ENCODE measurements at regions of chr2 and their contacts with region 1.

Region 1: DNA sequence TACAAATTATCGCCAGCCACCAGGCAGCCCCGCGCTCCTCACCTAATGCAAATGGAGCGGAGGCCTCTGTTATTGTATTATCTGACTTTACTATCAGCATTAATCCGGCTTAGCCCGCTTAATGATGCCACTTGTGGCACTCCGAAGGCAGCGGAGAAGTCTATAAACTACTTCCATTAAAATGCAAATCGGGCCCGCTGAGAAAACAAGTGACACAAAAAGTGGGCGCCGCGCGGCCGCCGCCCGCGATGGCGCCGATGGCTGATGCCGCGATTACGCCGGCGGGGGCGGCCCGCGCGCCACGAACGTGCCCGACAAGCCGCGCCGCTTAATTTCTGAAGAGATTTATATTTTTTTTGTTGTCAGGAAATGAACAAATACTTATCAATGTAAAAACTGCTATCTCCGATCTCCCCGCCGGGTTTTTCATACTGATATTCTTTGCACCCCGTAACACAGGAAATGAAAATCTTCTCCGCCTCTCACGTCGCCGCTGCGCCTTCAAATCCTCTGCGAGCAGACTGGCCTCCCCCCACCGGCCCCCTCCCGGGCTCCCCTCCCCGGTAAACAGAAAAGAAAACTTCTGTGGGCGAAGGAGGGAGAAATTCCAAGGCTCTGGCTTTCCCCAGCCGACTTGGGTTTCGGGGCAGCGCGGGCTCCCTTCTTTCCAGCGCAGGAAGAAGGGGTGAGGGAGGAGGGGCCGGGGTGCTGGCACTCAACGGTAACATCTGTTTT is 221.8 kb downstream of the INSIG2 start:
- DNase-seq: peak; percentile 83
- ATAC-seq: peak; percentile 86
- H3K4me3 Mint-ChIP-seq: peak overlapping the region; percentile 76
- H3K27ac Mint-ChIP-seq: peak overlapping the region; percentile 93
- H3K4me1 Mint-ChIP-seq: peaks cover 7% of the 10 kb centered on the region
- H3K27me3 Mint-ChIP-seq: no peaks in the 10 kb centered on the region

Region 2: GRCh38 chr2:118013724-118014491 is 296.2 kb before region 1 on chr2 and contains the start of gene CCDC93:
- CTCF ChIA-PET with region 1: no interaction called
- POLR2A ChIA-PET with region 1: no interaction called
- intact Hi-C with region 1: loop called in 1 of 2 experiments (anchors 1 kb)
- DNase-seq: peak; percentile 90
- ATAC-seq: peak; percentile 89
- H3K4me3 Mint-ChIP-seq: peak within 1 kb of the TSS; percentile 85
- H3K27ac Mint-ChIP-seq: peak within 1 kb of the TSS; percentile 87
- H3K4me1 Mint-ChIP-seq: peaks cover 42% of the 10 kb centered on the region
- H3K27me3 Mint-ChIP-seq: no peaks in the 10 kb centered on the region
- total RNA-seq, gene CCDC93: 26.2 to 39.5 TPM

Region 3: DNA sequence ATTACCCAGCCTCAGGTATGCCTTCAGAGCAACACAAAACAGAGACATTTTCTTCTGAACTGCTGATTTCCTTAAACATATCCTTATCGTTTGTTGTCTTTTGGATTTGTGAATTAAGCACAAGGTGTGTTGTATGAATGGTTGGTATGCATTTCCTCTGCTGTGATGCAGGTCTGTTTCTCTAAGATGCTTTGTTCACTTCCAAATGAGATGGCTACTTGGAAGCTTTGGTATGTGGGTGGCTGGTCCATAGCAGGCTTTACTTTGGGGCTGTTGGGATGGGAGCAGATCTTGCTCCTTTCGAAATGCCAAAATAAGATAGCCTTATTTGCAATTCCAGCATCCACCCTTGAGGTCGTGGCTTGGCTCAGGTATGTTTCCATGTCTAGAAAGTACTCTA is 35.4 kb after region 1 on chr2:
- CTCF ChIA-PET with region 1: no interaction called
- POLR2A ChIA-PET with region 1: no interaction called
- intact Hi-C with region 1: no loop called
- DNase-seq: no peak
- ATAC-seq: no peak
- H3K4me3 Mint-ChIP-seq: no peak overlapping the region
- H3K27ac Mint-ChIP-seq: no peak overlapping the region
- H3K4me1 Mint-ChIP-seq: no peaks in the 10 kb centered on the region
- H3K27me3 Mint-ChIP-seq: peaks cover 10% of the 10 kb centered on the region

Region 4: GRCh38 chr2:118965737-118966136 is 655.6 kb after region 1 on chr2:
- CTCF ChIA-PET with region 1: no interaction called
- POLR2A ChIA-PET with region 1: no interaction called
- intact Hi-C with region 1: no loop called
- DNase-seq: no peak
- ATAC-seq: no peak
- H3K4me3 Mint-ChIP-seq: no peak overlapping the region
- H3K27ac Mint-ChIP-seq: no peak overlapping the region
- H3K4me1 Mint-ChIP-seq: no peaks in the 10 kb centered on the region
- H3K27me3 Mint-ChIP-seq: peaks cover 12% of the 10 kb centered on the region

Measured in activated CD4-positive, alpha-beta T cell treated with anti-CD3 and anti-CD28 coated beads for 36 hours (primary cell).